ENCODE measurements at regions of chr10 and their contacts with region 1.

Region 1: GRCh38 chr10:11724938-11725776 is 17.0 kb upstream of the ECHDC3 start:
- DNase-seq: peak; percentile 79
- ATAC-seq: peak; percentile 96
- H3K4me3 ChIP-seq: no peak overlapping the region
- H3K27ac ChIP-seq: no peak overlapping the region
- H3K4me1 ChIP-seq: no peaks in the 10 kb centered on the region
- H3K27me3 ChIP-seq: peaks cover 10% of the 10 kb centered on the region
- CTCF ChIP-seq: peak; percentile 83
- POLR2A ChIP-seq: peak; percentile 28; the same call in 1 of the 2 replicates
- RAD21 ChIP-seq: peak; percentile 93

Region 2: GRCh38 chr10:11611248-11612020 is 113.7 kb before region 1 on chr10 and contains the start of gene USP6NL:
- CTCF ChIA-PET with region 1: no interaction called
- POLR2A ChIA-PET with region 1: no interaction called
- dilution Hi-C with region 1: no loop called
- in situ Hi-C with region 1: no loop called
- intact Hi-C with region 1: loop called (anchors 5 kb)
- DNase-seq: peak; percentile 74
- ATAC-seq: peak; percentile 97
- H3K4me3 ChIP-seq: peak within 1 kb of the TSS; percentile 87
- H3K27ac ChIP-seq: peak within 1 kb of the TSS; percentile 59; the same call in 1 of the 2 replicates
- H3K4me1 ChIP-seq: peaks cover 4% of the 10 kb centered on the region
- H3K27me3 ChIP-seq: no peaks in the 10 kb centered on the region
- CTCF ChIP-seq: no peak
- POLR2A ChIP-seq: peak; percentile 56; the same call in 1 of the 2 replicates
- RAD21 ChIP-seq: no peak
- total RNA-seq, gene USP6NL: 9.1 and 11.9 TPM in 2 replicates

Region 3: GRCh38 chr10:11757821-11758463 is 32.8 kb after region 1 on chr10:
- CTCF ChIA-PET with region 1: interaction called, 4 read pairs
- POLR2A ChIA-PET with region 1: no interaction called
- dilution Hi-C with region 1: no loop called
- in situ Hi-C with region 1: no loop called
- intact Hi-C with region 1: loop called (anchors 1 kb)
- DNase-seq: peak; percentile 81
- ATAC-seq: peak; percentile 98
- H3K4me3 ChIP-seq: no peak overlapping the region
- H3K27ac ChIP-seq: 0 out of 2 replicates have a peak overlapping the region, but pooled peaks have one; percentile 16
- H3K4me1 ChIP-seq: peaks cover 7% of the 10 kb centered on the region; the same call in 1 of the 2 replicates
- H3K27me3 ChIP-seq: no peaks in the 10 kb centered on the region
- CTCF ChIP-seq: peak; percentile 90
- POLR2A ChIP-seq: 0 out of 2 replicates have a peak, but pooled peaks have one; percentile 28
- RAD21 ChIP-seq: peak; percentile 89